ENCODE measurements at regions of chr1 and their contacts with region 1.

Region 1: GRCh38 chr1:209490013-209490412 is 93.5 kb upstream of the CAMK1G start:
- DNase-seq: no peak
- H3K4me3 ChIP-seq: no peak overlapping the region
- H3K27ac ChIP-seq: no peak overlapping the region
- H3K4me1 ChIP-seq: no peaks in the 10 kb centered on the region; a peak in 1 of 7 replicates
- H3K27me3 ChIP-seq: peaks cover 0 to 1% (median 0%) of the 10 kb centered on the region in 4 experiments; a peak in 1 of 7 replicates
- CTCF ChIP-seq: peak in 2 of 3 experiments; percentile 25 to 50; a peak in 2 of 4 replicates
- EP300 ChIP-seq: no peak
- POLR2A ChIP-seq: no peak
- RAD21 ChIP-seq: peak; percentile 71 to 78

Region 2: DNA sequence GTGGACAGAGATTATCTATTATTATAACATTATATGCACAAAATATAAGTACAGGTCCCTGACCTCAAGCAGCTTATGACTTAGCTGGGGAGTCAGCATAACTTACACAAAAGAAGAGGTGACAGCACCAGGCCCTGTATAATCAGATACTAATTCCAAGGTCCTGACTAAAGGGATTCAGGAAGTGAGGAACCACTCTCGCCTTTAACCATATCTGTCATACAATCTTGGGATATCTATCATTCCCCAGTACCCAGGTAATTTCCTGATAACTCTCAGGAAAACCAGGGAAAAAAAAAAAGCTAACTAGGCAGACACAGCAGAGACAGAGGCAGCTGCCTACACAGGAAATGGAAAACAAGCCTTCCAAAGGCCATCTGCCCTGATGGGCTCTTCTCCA is 15.0 kb after region 1 on chr1:
- CTCF ChIA-PET with region 1: interaction called, 12 read pairs
- POLR2A ChIA-PET with region 1: no interaction called
- DNase-seq: no peak
- H3K4me3 ChIP-seq: no peak overlapping the region
- H3K27ac ChIP-seq: no peak overlapping the region
- H3K4me1 ChIP-seq: no peaks in the 10 kb centered on the region
- H3K27me3 ChIP-seq: no peaks in the 10 kb centered on the region
- CTCF ChIP-seq: no peak
- EP300 ChIP-seq: no peak
- POLR2A ChIP-seq: no peak
- RAD21 ChIP-seq: no peak

Measured in H1 (cell line).